SK-N-SH (cell line): ENCODE measurements at regions of chr19 and their contacts with region 1.

Region 1: DNA sequence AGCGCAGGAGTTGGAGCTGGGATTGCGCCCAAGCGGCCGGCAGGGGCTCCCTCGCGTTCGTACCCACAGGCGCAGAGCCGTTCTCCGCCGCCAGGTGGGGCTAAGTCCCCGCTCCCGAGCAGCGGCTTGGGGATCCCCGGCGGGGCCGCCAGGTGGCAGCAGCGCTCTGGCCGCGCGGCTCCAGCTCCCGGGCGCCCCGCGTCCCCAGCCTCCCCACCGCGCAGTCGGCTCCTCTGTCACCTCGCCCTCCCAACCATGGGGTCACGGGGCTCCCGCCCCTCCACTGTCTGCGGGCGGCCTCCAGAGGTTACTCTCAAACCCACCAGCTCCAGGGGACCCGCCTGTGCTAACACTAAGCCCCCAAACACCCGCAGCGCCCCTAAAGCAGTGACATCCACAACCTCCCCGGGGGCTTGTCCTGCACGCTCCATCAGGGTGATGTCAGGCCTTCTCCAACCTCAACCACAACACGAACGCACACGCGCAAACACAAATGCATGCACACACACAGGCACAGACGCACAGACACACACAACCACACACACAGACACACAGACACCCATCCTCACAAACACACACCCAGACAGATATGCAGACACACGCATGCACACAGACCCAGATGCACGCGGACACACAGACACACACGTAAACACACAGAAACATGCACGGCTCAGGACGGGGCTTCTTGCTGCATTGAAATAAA is 18.4 kb upstream of the KCTD15 start:
- DNase-seq: peak; percentile 98
- H3K4me3 ChIP-seq: peak overlapping the region in 1 of 2 experiments; percentile 53; a peak in 2 of 4 replicates
- H3K27ac ChIP-seq: no peak overlapping the region
- H3K4me1 ChIP-seq: peaks cover 0 to 21% of the 10 kb centered on the region in 2 experiments; a peak in 1 of 4 replicates
- H3K27me3 ChIP-seq: no peaks in the 10 kb centered on the region; the same call in 1 of the 2 replicates
- CTCF ChIP-seq: peak; percentile 97
- EP300 ChIP-seq: no peak
- RAD21 ChIP-seq: peak; percentile 99

Region 2: GRCh38 chr19:33430674-33431277 is 347.5 kb before region 1 on chr19:
- CTCF ChIA-PET with region 1: interaction called, 137 read pairs
- POLR2A ChIA-PET with region 1: no interaction called
- DNase-seq: peak; percentile 83
- H3K4me3 ChIP-seq: peak overlapping the region in 1 of 2 experiments; percentile 28; a peak in 1 of 4 replicates
- H3K27ac ChIP-seq: peak overlapping the region in 1 of 2 experiments; percentile 73; a peak in 1 of 4 replicates
- H3K4me1 ChIP-seq: peaks cover 16 to 44% of the 10 kb centered on the region in 2 experiments
- H3K27me3 ChIP-seq: no peaks in the 10 kb centered on the region
- CTCF ChIP-seq: peak; percentile 84
- EP300 ChIP-seq: no peak
- RAD21 ChIP-seq: peak; percentile 97

Region 3: DNA sequence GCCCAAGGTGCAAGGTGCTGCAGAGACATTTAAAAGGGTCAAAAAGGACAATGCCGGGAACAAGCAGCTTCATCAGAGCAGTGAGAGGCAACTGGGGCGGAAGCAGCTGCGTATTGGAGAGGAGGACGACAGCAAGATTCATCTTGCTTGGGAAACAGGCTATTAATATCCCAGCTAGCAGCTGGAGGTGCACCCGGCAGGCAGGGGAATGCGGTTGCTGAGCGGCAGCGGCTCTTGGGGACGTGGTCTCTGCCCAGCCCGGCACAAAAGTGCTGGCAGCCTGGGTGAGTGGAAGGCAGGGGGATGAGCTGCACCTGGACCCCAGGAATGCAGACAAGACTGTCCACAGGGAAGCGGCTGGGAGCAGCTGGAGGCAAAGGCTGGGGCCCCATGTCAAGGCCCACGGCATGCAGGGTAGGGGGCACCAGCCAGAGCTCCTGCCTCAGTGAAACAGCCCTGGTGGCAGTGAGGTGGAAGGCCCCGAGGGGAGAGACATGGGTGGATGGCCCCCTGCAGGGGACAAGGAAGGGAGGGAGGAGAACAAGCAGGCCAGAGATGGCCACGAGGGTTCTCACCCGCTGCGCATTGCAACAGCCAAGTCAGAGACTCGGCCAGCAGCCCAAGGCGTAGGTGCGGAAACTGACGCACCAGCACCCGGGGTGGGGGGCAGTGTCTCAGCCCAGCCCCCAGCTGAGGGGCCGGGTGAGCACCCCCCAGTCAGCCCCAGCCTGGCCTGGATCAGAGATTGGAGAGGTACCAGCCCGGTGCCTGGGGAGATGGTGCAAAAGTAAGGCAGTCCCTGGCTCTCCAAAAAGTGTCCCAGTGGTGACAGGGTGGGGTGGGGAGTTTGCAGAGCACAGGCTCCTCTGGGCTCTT is 291.1 kb before region 1 on chr19:
- CTCF ChIA-PET with region 1: no interaction called
- POLR2A ChIA-PET with region 1: no interaction called
- DNase-seq: peak; percentile 16
- H3K4me3 ChIP-seq: no peak overlapping the region
- H3K27ac ChIP-seq: no peak overlapping the region
- H3K4me1 ChIP-seq: no peaks in the 10 kb centered on the region; a peak in 1 of 4 replicates
- H3K27me3 ChIP-seq: no peaks in the 10 kb centered on the region
- CTCF ChIP-seq: no peak
- EP300 ChIP-seq: no peak
- RAD21 ChIP-seq: no peak

Region 4: DNA sequence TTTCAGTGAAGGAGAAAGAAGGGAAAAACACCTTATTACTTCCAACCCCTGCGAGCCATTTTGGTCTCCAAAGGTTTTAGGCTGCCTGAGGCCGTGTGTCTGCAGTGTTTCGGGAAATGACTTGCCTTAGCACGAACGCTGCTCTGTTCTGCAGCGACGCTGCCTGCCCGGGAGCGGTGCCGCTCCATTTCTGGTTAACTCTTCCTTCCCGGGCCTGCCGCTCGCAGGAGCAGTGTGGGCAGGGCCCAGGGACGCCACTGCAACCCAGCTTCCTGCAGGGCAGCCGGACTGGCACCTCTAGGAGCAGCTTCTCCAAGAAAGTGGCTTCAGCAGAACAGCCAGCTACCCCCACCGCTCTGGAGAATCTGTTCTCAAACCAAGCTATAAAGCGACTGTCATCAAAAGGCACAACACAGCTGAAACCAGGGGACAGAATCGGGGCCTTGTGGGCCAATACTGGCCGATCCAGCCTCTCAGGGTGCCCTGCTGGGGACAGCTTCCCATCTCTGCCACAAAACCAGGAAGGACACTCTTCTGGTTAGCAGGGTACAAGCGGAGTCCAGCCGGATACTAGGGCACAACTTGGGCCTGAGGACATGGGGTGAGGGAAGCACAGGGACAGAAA is 90.7 kb after region 1 on chr19:
- CTCF ChIA-PET with region 1: interaction called, 41 read pairs
- POLR2A ChIA-PET with region 1: no interaction called
- DNase-seq: peak; percentile 73
- H3K4me3 ChIP-seq: no peak overlapping the region
- H3K27ac ChIP-seq: peak overlapping the region in 1 of 2 experiments; percentile 98; a peak in 2 of 4 replicates
- H3K4me1 ChIP-seq: peaks cover 0 to 30% of the 10 kb centered on the region in 2 experiments; a peak in 2 of 4 replicates
- H3K27me3 ChIP-seq: no peaks in the 10 kb centered on the region
- CTCF ChIP-seq: no peak
- EP300 ChIP-seq: peak in 1 of 2 experiments; percentile 57; a peak in 2 of 4 replicates
- RAD21 ChIP-seq: peak; percentile 45; the same call in 1 of the 2 replicates

Region 5: DNA sequence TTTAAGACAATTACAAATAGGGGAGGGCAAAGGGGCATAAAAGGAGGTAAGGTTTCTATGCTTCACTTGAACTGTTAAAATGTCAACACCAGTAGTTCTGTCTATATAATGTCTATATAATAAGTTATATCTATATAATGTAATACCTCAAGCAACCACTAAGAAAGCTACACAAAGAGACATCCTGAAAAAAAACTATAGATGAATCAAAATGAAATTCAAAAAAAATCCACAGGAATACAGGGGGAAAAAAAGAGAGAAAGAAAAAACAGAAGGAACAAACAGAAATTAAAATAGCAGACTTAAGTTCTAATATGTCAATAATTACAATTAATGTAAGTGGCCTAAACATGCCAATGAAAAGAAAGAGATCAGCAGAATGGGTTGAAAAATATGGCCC is 204.5 kb after region 1 on chr19:
- CTCF ChIA-PET with region 1: interaction called, 14 read pairs
- POLR2A ChIA-PET with region 1: no interaction called
- DNase-seq: no peak
- H3K4me3 ChIP-seq: no peak overlapping the region
- H3K27ac ChIP-seq: no peak overlapping the region
- H3K4me1 ChIP-seq: peaks cover 0 to 12% of the 10 kb centered on the region in 2 experiments; a peak in 2 of 4 replicates
- H3K27me3 ChIP-seq: no peaks in the 10 kb centered on the region
- CTCF ChIP-seq: no peak
- EP300 ChIP-seq: no peak
- RAD21 ChIP-seq: no peak

Region 6: GRCh38 chr19:34082289-34083077 is 304.2 kb after region 1 on chr19:
- CTCF ChIA-PET with region 1: interaction called, 336 read pairs
- POLR2A ChIA-PET with region 1: no interaction called
- DNase-seq: no peak
- H3K4me3 ChIP-seq: no peak overlapping the region
- H3K27ac ChIP-seq: no peak overlapping the region
- H3K4me1 ChIP-seq: no peaks in the 10 kb centered on the region
- H3K27me3 ChIP-seq: no peaks in the 10 kb centered on the region
- CTCF ChIP-seq: no peak
- EP300 ChIP-seq: no peak
- RAD21 ChIP-seq: no peak

Region 7: DNA sequence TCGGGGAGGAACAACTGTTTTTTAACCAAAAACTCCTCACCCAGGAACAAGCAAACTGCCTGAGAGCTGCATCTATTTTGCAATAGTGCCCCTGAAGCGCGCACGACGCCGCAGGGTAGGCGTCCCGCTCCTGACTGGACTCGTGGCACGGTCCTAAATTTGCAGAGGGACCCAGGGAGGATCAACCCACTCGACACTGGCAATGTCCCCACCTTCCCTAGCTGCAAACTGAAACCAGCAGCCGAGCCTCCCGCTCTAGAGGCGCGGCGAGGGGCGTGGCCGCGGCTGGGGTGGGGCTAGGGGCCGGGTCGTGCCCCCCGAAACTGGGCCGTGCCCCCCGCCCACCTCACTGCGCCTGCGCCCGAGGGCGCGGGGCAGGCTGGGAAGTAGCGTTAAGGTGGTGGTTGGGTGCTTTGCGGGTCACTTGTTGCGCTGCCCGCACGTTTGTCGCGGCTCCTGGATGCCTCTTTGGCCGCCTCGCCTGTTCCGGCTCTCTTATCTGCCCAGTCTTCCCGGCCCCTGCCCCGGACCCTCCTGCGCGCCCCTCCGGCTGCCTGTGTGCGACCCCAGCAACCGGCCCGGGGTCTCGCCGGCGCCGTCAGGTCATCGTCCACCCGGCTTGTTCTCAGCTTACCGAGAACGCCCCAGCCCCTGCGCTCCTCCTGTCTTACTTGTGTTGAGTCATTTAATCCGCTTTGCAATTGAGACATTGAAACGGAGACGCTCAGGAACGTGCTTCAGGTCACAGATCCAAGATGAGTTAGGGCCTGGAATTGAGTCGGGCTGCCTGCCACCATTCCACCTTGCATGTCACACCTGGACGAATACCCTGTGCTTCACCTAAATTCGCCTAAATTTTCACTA is 356.2 kb after region 1 on chr19:
- CTCF ChIA-PET with region 1: interaction called, 49 read pairs
- POLR2A ChIA-PET with region 1: no interaction called
- DNase-seq: peak; percentile 100
- H3K4me3 ChIP-seq: peak overlapping the region; percentile 68 to 79
- H3K27ac ChIP-seq: peak overlapping the region; percentile 51 to 76
- H3K4me1 ChIP-seq: no peaks in the 10 kb centered on the region; a peak in 1 of 4 replicates
- H3K27me3 ChIP-seq: no peaks in the 10 kb centered on the region
- CTCF ChIP-seq: no peak
- EP300 ChIP-seq: no peak; a peak in 1 of 4 replicates
- RAD21 ChIP-seq: no peak